Endothelial cell of umbilical vein (primary cell): ENCODE measurements at regions of chr18 and their contacts with region 1.

Region 1: DNA sequence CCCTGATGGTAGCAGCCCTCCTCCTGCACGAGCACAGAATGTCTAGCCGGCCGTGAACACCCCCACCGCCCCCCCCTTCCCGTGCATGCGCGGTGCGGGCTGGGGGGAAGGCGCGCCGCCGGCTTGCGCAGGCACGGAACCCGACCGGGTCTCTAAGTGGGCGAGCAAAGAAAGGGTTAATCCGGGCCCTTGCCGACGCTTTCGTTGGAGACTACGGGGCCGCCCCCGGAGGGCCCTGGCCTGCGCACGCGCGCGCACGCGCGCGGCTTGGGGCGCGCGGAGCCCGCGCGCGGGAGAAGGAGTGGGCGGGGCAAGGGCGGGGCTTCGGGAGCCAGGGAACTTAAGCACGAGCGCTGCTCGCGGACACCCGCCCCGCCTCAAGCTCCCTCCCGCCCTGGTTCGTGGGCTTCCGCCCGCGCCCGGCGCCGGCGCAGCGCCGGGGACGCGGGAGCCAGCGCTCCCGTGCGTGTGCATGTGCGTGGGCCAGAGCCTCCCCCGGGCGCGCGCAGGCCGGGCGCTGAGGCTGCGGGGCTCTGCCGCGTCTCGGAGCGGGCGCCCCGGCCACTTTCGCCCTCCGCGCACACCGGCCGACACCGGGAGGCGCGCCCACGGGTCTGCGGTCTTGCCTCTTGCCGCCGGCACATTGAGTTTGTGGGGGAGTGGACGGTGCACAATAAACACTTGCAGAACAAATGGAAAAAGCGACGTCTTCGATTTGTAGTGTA is 617 bp upstream of the ZBTB14 start:
- DNase-seq: peak; percentile 97
- H3K4me3 ChIP-seq: peak overlapping the region; percentile 44 to 94 (median 49)
- H3K27ac ChIP-seq: peak overlapping the region; percentile 59
- H3K4me1 ChIP-seq: peaks cover 17% of the 10 kb centered on the region
- H3K27me3 ChIP-seq: peaks cover 10 to 17% of the 10 kb centered on the region in 2 experiments
- CTCF ChIP-seq: no peak
- POLR2A ChIP-seq: no peak

Region 2: DNA sequence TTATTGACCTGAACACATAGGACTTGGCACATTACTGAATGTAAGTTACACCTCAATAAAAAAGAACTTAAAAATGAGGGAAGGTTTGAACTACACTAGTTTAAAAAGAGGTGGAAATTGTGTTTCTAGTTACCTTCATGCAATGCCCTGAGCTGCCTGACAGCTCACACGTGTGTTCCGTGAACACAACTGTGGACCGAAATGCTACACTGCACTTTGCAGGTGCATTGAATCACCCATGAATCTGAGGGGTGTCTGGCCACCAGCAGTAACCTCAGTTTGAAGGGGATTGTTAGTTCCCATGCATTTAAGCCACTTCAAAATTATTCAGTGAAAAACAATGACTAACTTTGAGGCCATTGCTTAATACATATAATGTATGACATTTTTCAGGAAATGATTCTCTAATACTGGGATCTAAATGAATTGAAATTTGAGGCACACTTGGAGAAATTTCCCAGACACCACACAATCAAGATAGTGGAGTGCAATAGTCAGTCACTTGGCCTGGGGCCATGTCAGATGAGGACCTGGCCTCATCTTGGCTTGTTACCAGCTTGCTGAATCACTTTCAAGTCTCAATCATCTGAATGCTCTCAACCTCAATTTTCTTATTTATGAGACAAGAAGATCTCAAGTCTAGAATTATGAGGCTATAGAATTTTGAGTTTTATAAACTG is 1974.9 kb before region 1 on chr18:
- CTCF ChIA-PET with region 1: no interaction called
- POLR2A ChIA-PET with region 1: no interaction called
- dilution Hi-C with region 1: no loop called
- intact Hi-C with region 1: loop called (anchors 5 kb)
- DNase-seq: peak; percentile 94
- H3K4me3 ChIP-seq: no peak overlapping the region
- H3K27ac ChIP-seq: peak overlapping the region; percentile 49
- H3K4me1 ChIP-seq: peaks cover 33% of the 10 kb centered on the region
- H3K27me3 ChIP-seq: no peaks in the 10 kb centered on the region
- CTCF ChIP-seq: no peak
- POLR2A ChIP-seq: no peak

Region 3: GRCh38 chr18:5159080-5159479 is 137.1 kb before region 1 on chr18:
- CTCF ChIA-PET with region 1: no interaction called
- POLR2A ChIA-PET with region 1: no interaction called
- dilution Hi-C with region 1: no loop called
- intact Hi-C with region 1: no loop called
- DNase-seq: no peak
- H3K4me3 ChIP-seq: no peak overlapping the region
- H3K27ac ChIP-seq: no peak overlapping the region
- H3K4me1 ChIP-seq: no peaks in the 10 kb centered on the region
- H3K27me3 ChIP-seq: no peaks in the 10 kb centered on the region
- CTCF ChIP-seq: no peak
- POLR2A ChIP-seq: no peak

Region 4: DNA sequence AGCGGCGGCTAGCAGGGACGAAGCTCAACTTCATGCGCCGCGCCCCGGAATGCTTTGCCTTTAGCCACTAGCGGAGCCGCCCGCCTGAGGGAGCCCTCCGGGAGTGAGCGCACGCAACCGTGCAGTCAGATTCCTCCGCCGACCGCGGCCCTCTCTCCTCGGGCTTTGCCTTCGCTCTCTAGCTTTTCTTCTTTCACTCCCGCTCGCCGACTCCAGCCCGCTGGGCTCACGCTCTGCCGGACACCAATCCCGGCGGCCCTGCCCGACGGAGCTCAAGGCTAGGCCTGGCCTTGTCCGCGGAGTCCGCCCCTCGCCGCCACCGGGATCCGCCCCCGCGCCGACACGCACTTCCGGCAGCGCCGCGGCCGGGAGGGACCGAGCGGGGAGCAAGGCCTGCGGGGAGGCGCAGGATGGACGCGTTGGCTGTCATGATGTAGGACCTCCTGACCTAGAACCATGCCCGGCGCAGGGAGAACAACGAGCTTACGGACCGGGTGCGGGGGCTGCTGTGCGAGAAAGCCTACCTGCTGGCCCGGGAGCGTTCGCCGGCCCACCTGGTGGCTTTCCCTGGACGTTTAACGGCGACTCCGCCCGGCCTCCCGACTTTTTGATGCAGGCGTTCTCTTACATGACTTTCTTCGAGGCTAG is 58.3 kb before region 1 on chr18:
- CTCF ChIA-PET with region 1: interaction called, 25 read pairs
- POLR2A ChIA-PET with region 1: interaction called, 22 read pairs
- dilution Hi-C with region 1: no loop called
- intact Hi-C with region 1: loop called (anchors 1 kb)
- DNase-seq: peak; percentile 91
- H3K4me3 ChIP-seq: peak overlapping the region; percentile 66 to 80 (median 72)
- H3K27ac ChIP-seq: peak overlapping the region; percentile 73
- H3K4me1 ChIP-seq: peaks cover 20% of the 10 kb centered on the region
- H3K27me3 ChIP-seq: peaks cover 9 to 17% of the 10 kb centered on the region in 2 experiments
- CTCF ChIP-seq: peak in 1 of 2 donors; percentile 61
- POLR2A ChIP-seq: peak; percentile 81

Region 5: GRCh38 chr18:5309888-5310470 is 13.8 kb after region 1 on chr18:
- CTCF ChIA-PET with region 1: no interaction called
- POLR2A ChIA-PET with region 1: no interaction called
- dilution Hi-C with region 1: no loop called
- intact Hi-C with region 1: no loop called
- DNase-seq: no peak
- H3K4me3 ChIP-seq: no peak overlapping the region
- H3K27ac ChIP-seq: no peak overlapping the region
- H3K4me1 ChIP-seq: no peaks in the 10 kb centered on the region
- H3K27me3 ChIP-seq: no peaks in the 10 kb centered on the region
- CTCF ChIP-seq: no peak
- POLR2A ChIP-seq: no peak

Region 6: DNA sequence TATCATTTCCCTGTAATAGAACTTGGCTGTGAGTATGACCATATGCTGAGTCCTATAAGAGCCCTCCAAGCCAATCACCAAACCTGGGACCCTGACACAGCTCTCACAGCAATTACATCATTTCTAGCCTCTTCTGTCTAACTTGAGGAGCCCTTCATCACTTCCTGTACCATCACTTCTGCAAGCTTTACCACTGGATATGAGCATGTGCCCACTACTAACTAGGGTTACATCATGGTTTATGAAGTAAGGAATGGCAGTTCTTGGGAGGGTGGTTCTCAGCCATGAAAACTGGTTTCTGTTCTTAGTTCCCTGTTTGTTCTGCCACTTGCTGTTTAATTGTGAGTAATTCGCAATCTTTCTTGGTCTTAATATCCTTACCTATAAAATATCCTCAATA is 278.7 kb after region 1 on chr18:
- CTCF ChIA-PET with region 1: no interaction called
- POLR2A ChIA-PET with region 1: no interaction called
- dilution Hi-C with region 1: no loop called
- intact Hi-C with region 1: loop called (anchors 1 kb)
- DNase-seq: peak; percentile 7
- H3K4me3 ChIP-seq: no peak overlapping the region
- H3K27ac ChIP-seq: no peak overlapping the region
- H3K4me1 ChIP-seq: peaks cover 44% of the 10 kb centered on the region
- H3K27me3 ChIP-seq: no peaks in the 10 kb centered on the region
- CTCF ChIP-seq: no peak
- POLR2A ChIP-seq: no peak

Region 7: GRCh38 chr18:5630057-5630899 is 334.1 kb after region 1 on chr18:
- CTCF ChIA-PET with region 1: no interaction called
- POLR2A ChIA-PET with region 1: no interaction called
- dilution Hi-C with region 1: no loop called
- intact Hi-C with region 1: loop called (anchors 1 kb)
- DNase-seq: peak; percentile 65
- H3K4me3 ChIP-seq: peak overlapping the region; percentile 55 to 63 (median 61)
- H3K27ac ChIP-seq: no peak overlapping the region
- H3K4me1 ChIP-seq: peaks cover 19% of the 10 kb centered on the region
- H3K27me3 ChIP-seq: peaks cover 27 to 35% of the 10 kb centered on the region in 2 experiments
- CTCF ChIP-seq: no peak
- POLR2A ChIP-seq: no peak